Posterior vena cava (tissue), 2 donors: ENCODE measurements at regions of chr3 and their contacts with region 1.

Region 1: DNA sequence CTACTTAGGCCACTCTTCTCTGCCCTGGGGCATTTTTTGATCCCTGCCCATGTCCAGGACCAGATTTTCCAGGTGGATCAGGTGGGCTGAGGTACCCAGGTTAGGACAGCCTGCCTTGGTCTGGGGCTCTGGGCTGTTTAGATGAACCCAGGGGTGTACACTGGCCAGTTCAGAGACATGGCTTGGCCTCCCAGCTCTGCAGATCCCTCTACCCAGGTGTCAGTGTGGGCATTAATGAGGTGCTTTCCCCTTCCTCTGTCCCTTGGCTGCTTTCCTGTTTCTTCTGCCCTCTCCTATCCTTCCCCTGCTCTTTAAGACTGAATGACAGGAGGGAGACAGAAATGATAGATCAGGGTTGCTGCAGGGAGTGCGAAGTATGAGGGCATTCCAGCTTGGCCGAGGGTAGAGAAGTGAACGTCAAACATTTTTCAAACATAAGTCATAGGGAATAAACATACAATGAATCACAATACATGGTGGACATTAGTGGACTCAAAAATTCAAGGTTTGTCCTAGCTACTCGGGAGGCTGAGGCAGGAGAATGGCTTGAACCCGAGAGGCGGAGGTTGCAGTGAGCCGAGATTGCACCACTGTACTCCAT is 30.5 kb downstream of the RTP1 start:
- DNase-seq: no peak

Region 2: GRCh38 chr3:187319699-187320302 is 92.0 kb after region 1 on chr3:
- intact Hi-C with region 1: loop called in 1 of 2 experiments (anchors 5 kb)
- DNase-seq: no peak

Region 3: GRCh38 chr3:187473778-187474406 is 246.1 kb after region 1 on chr3:
- intact Hi-C with region 1: no loop called
- DNase-seq: no peak

Region 4: DNA sequence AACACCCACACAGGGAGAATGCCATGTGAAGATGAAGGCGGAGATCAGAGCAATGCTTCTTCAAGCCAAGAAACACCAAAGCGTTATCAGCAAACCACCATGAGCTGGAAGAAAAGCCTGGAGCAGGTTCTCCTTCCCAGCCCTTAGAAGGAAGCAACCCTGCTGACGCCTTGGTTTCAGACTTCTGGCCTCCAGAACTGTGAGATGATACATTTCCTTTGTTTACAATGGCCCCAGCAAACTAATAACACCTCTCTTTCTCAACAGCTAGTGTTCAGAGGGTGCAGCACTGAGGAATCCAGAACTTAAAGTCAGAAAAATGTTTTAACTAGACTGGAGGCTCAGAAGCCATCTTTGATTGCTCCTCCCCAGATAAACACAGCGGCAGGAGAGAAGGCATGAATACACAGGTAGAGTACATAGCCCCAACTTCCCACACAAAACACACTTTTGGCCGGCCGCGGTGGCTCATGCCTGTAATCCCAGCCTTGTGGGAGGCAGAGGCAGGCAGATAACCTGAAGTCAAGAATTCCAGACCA is 793.8 kb after region 1 on chr3:
- intact Hi-C with region 1: no loop called
- DNase-seq: no peak